ENCODE measurements at regions of chr1 and their contacts with region 1.

Region 1: DNA sequence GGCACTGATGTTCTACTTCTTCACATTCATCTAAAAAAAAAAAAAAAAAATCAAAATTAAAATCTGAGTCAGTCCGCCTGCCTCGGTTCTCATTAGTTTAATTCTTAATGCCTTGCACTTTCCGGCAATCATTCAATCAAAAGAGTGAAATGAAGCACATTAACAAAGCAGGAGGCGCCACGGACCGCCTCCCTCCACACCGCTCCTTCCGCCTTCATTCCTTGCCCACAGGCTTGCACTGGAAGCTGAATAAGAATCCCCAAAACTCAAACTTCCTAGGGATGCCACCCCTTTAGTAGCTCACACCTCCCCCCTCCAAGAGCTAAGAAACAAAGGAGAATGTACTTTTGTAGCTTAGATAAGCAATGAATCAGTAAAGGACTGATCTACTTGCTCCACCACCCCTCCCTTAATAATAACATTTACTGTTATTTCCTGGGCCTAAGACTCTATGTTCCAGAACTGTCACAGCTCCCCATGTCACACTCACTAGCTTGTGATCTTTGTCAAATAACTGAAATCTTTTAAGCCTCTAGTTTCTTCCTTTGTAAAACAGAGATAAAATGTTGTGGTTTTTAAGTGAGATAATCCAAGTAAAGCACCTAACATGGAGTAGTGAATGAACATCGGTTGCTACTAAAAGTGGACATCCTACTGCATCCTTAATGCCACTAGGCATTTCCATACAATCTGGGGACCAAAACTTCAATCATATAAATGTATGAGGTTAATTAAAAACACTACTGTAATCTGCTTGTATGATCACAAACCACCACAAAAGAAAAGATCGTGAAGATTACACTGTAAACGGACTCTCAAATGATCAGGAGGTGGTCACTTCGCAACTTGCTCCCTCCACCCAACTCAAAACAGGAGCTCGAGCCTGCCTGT is 27.4 kb downstream of the LGALS8 start:
- DNase-seq: no peak
- H3K4me3 Mint-ChIP-seq: no peak overlapping the region
- H3K27ac Mint-ChIP-seq: peak overlapping the region; percentile 61
- H3K4me1 Mint-ChIP-seq: peaks cover 17% of the 10 kb centered on the region
- H3K27me3 Mint-ChIP-seq: no peaks in the 10 kb centered on the region

Region 2: GRCh38 chr1:236502885-236503639 is 48.1 kb before region 1 on chr1:
- intact Hi-C with region 1: no loop called
- DNase-seq: no peak
- H3K4me3 Mint-ChIP-seq: peak overlapping the region; percentile 30
- H3K27ac Mint-ChIP-seq: peak overlapping the region; percentile 53
- H3K4me1 Mint-ChIP-seq: peaks cover 13% of the 10 kb centered on the region
- H3K27me3 Mint-ChIP-seq: peaks cover 3% of the 10 kb centered on the region

Region 3: GRCh38 chr1:236581528-236581927 is 30.3 kb after region 1 on chr1:
- intact Hi-C with region 1: loop called (anchors 2 kb)
- DNase-seq: no peak
- H3K4me3 Mint-ChIP-seq: no peak overlapping the region
- H3K27ac Mint-ChIP-seq: no peak overlapping the region
- H3K4me1 Mint-ChIP-seq: no peaks in the 10 kb centered on the region
- H3K27me3 Mint-ChIP-seq: no peaks in the 10 kb centered on the region

Measured in activated T-helper 1 cell treated with anti-CD3 and anti-CD28 coated beads, Interleukin-12 subunit alpha, Interleukin-12 subunit beta, Interleukin-2, Interleukin-4 antibody, amounts not matched to agents 30 ng/mL and 10 ng/mL and 1 ng/mL, durations not matched to agents 14 hours and 24 hours and 36 hours (primary cell).